ENCODE measurements at regions of chrX and their contacts with region 1.

Region 1: DNA sequence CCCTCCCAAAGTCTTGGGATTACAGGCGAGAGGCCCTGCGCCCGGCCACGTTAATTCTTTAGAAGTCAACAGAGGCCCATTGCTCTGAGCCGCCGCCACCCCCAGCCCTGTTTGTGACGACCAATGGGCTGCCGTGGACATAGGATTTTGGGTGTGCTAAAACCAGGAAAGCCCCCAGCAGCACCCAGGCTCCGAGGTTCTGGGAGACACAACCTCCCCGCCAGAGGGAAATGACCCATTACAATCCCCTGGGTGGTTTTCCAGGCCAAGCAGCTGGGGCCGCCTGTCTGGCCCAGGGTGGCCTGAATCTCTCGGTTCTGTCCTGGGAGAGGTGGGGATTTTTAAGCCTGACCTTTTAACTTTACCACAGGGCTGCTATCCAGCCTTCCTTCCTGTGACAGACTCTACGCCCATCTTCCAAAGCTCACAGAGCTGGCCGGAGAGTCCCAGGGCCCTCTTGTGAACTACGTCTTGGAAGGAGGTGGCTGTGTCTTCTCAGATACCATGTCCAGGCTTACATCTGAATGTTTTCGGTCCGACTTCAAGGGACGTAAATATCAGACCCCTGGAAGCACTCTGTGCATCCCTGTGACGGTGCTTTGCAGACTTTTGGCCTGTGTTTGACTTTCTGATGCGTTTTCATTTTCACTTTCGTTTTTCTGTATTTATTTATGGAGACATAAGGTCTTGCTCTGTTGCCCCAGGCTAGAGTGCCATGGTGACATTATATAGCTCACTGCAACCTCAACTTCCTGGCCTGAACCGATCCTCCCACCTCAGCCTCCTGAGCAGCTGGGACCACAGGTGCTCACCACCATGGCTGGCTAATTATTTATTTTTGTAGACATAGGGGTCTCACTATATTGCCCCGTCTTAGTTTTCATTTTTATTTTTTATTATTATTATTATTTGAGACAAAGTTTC is 36.0 kb downstream of the P2RY8 start:
- DNase-seq: peak; percentile 85
- ATAC-seq: peak; percentile 34
- H3K4me3 ChIP-seq: peak overlapping the region in 3 of 5 experiments; percentile 11 to 50 (median 31)
- H3K4me3 Mint-ChIP-seq: peak overlapping the region; percentile 70
- H3K27ac ChIP-seq: peak overlapping the region; percentile 93 to 94
- H3K27ac Mint-ChIP-seq: peak overlapping the region; percentile 93
- H3K4me1 ChIP-seq: peaks cover 46 to 61% of the 10 kb centered on the region in 2 donors
- H3K4me1 Mint-ChIP-seq: peaks cover 55% of the 10 kb centered on the region
- H3K27me3 ChIP-seq: no peaks in the 10 kb centered on the region
- H3K27me3 Mint-ChIP-seq: no peaks in the 10 kb centered on the region
- CTCF ChIP-seq: no peak

Region 2: GRCh38 chrX:1468250-1468772 is 32.7 kb before region 1 on chrX:
- CTCF ChIA-PET with region 1: no interaction called
- POLR2A ChIA-PET with region 1: no interaction called
- intact Hi-C with region 1: loop called (anchors 1 kb)
- DNase-seq: peak; percentile 86
- ATAC-seq: peak; percentile 67
- H3K4me3 ChIP-seq: no peak overlapping the region
- H3K4me3 Mint-ChIP-seq: peak overlapping the region; percentile 80
- H3K27ac ChIP-seq: peak overlapping the region; percentile 69 to 84
- H3K27ac Mint-ChIP-seq: peak overlapping the region; percentile 95
- H3K4me1 ChIP-seq: peaks cover 68 to 86% of the 10 kb centered on the region in 2 donors
- H3K4me1 Mint-ChIP-seq: peaks cover 68% of the 10 kb centered on the region
- H3K27me3 ChIP-seq: no peaks in the 10 kb centered on the region
- H3K27me3 Mint-ChIP-seq: no peaks in the 10 kb centered on the region
- CTCF ChIP-seq: peak; percentile 25

Region 3: DNA sequence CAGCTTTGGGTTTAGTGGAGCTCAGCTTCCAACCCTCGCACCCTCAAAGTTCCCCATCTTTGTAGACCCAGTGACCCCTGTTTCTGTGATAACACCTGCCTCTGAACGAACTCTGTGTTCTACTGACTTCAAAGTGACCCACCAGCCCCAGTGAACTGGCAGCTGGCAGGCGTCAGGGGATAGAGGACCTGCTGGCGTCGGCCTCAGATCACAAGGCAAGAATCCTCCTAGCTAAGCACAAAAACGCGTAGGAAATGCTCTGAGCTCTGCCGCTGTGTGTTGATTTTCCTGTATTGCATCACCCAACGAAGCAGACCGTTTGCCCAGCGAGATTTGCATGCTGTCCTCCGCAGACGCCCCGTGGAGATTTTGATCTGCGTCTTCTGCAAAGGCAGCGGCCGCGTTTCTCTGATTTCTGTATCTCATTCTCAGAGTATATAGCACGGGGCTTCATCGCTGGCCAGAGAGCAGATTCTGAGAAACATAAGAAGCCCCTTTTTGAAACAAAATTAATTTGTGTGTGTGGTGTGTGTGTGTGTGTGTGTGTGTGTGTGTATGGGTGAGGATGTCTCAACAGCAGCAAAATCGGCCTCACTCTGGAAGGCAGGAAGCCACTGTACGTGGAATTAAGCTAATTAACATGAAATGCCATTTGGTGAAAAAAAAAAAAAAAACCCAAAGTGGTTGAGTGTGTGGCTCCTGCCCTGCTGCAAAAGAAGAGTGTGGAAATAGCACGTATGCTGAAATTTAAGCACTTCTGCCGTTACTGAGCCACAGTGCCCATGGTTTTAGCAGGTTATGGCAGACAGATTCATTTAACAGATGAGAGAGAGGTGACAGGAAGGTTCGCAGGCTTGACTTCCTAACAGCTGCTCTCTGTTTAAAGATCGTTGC is 19.1 kb before region 1 on chrX:
- CTCF ChIA-PET with region 1: no interaction called
- POLR2A ChIA-PET with region 1: no interaction called
- intact Hi-C with region 1: loop called (anchors 1 kb)
- DNase-seq: peak; percentile 88
- ATAC-seq: peak; percentile 75
- H3K4me3 ChIP-seq: peak overlapping the region in 4 of 5 experiments; percentile 19 to 45 (median 26)
- H3K4me3 Mint-ChIP-seq: peak overlapping the region; percentile 80
- H3K27ac ChIP-seq: peak overlapping the region; percentile 68 to 89
- H3K27ac Mint-ChIP-seq: peak overlapping the region; percentile 98
- H3K4me1 ChIP-seq: peaks cover 44 to 72% of the 10 kb centered on the region in 2 donors
- H3K4me1 Mint-ChIP-seq: peaks cover 74% of the 10 kb centered on the region
- H3K27me3 ChIP-seq: no peaks in the 10 kb centered on the region
- H3K27me3 Mint-ChIP-seq: no peaks in the 10 kb centered on the region
- CTCF ChIP-seq: no peak

Region 4: DNA sequence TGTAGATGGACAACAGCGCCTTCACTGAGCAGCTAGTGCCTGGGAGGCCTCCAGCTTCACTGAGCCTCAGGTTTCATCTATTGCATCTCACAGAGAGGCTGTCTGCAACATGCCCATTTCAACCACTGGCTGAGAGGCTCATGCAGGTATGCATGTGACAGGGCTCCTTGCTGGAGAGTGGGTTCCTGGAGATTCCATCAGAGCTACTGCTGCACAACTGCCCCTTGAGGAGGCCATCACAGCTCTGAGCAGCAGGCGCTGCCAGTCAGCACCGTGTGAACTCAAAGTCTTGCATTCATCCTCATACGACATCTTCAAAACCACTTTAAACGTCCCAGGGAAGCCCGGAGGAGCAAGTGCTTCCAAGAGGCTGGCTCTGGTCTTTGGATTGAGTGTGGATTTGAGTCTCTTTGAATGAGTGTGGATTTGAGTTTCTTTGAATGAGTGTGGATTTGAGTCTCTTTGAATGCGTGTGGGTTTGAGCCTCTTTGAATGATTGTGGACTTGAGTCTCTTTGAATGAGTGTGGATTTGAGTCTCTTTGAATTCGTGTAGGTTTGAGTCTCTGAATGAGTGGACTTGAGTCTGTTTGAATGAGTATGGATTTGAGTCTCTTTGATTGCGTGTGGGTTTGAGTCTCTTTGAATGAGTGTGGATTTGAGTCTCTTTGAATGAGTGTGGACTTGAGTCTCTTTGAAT is 27.4 kb after region 1 on chrX:
- CTCF ChIA-PET with region 1: no interaction called
- POLR2A ChIA-PET with region 1: no interaction called
- intact Hi-C with region 1: no loop called
- DNase-seq: no peak
- ATAC-seq: no peak
- H3K4me3 ChIP-seq: no peak overlapping the region
- H3K4me3 Mint-ChIP-seq: no peak overlapping the region
- H3K27ac ChIP-seq: peak overlapping the region in 1 of 2 donors; percentile 0
- H3K27ac Mint-ChIP-seq: no peak overlapping the region
- H3K4me1 ChIP-seq: peaks cover 28 to 44% of the 10 kb centered on the region in 2 donors
- H3K4me1 Mint-ChIP-seq: peaks cover 7% of the 10 kb centered on the region
- H3K27me3 ChIP-seq: no peaks in the 10 kb centered on the region
- H3K27me3 Mint-ChIP-seq: no peaks in the 10 kb centered on the region
- CTCF ChIP-seq: no peak

Region 5: DNA sequence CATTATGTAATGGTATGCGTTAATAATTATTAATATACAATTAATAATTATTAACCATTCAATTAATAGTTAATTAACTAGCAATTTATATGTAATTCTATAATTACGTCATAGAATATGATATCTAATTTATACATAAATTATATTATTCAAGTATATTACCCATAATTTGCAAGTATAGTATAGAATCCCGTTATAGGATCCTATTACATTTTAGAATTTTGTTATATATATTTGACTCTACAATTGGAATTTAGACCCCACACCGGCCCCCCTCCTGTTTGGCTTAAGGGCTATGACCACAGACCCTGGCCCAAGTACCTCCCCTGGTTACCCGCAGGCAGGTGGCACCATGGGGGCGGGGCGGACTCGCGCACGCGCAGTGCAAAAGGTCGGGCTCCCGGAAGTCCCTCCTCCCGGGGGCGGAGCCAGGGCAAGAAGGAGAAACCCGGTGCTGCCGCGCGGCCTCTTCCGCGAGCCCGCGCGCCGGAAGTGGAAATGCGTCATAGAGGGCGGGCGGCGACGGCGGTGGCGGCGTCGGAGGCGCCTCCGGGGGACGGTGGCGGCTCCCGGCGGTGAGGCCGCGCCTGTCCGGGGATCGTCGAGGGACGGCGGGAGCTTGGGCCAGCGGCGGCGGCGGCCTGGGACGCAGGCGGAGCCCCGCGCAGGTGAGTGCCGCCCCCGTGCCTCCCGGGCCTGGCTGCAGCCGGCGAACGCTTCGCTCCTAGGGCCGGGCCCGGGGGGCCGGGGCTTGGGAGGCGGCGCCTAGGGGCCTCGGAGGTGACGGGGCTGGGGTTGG is 90.3 kb after region 1 on chrX and contains the start of gene AKAP17A:
- CTCF ChIA-PET with region 1: no interaction called
- POLR2A ChIA-PET with region 1: no interaction called
- intact Hi-C with region 1: loop called (anchors 5 kb)
- DNase-seq: peak; percentile 97
- ATAC-seq: peak; percentile 88
- H3K4me3 ChIP-seq: peak within 1 kb of the TSS; percentile 55 to 90 (median 78)
- H3K4me3 Mint-ChIP-seq: peak within 1 kb of the TSS; percentile 95
- H3K27ac ChIP-seq: peak within 1 kb of the TSS; percentile 61 to 81
- H3K27ac Mint-ChIP-seq: peak within 1 kb of the TSS; percentile 95
- H3K4me1 ChIP-seq: peaks cover 20 to 47% of the 10 kb centered on the region in 2 donors
- H3K4me1 Mint-ChIP-seq: peaks cover 40% of the 10 kb centered on the region
- H3K27me3 ChIP-seq: no peaks in the 10 kb centered on the region
- H3K27me3 Mint-ChIP-seq: no peaks in the 10 kb centered on the region
- CTCF ChIP-seq: peak; percentile 26
- total RNA-seq, gene AKAP17A: 126 and 129 TPM in 2 replicates

Measured in B cell (primary cell).